Activated T-helper 1 cell treated with anti-CD3 and anti-CD28 coated beads, Interleukin-12 subunit alpha, Interleukin-12 subunit beta, Interleukin-2, Interleukin-4 antibody, amounts not matched to agents 30 ng/mL and 10 ng/mL and 1 ng/mL, durations not matched to agents 14 hours and 24 hours and 36 hours (primary cell): ENCODE measurements at regions of chr7 and their contacts with region 1.

Region 1: GRCh38 chr7:24336461-24336860 is 52.5 kb downstream of the NPY start:
- DNase-seq: no peak
- H3K4me3 Mint-ChIP-seq: no peak overlapping the region
- H3K27ac Mint-ChIP-seq: no peak overlapping the region
- H3K4me1 Mint-ChIP-seq: no peaks in the 10 kb centered on the region
- H3K27me3 Mint-ChIP-seq: peaks cover 3% of the 10 kb centered on the region

Region 2: DNA sequence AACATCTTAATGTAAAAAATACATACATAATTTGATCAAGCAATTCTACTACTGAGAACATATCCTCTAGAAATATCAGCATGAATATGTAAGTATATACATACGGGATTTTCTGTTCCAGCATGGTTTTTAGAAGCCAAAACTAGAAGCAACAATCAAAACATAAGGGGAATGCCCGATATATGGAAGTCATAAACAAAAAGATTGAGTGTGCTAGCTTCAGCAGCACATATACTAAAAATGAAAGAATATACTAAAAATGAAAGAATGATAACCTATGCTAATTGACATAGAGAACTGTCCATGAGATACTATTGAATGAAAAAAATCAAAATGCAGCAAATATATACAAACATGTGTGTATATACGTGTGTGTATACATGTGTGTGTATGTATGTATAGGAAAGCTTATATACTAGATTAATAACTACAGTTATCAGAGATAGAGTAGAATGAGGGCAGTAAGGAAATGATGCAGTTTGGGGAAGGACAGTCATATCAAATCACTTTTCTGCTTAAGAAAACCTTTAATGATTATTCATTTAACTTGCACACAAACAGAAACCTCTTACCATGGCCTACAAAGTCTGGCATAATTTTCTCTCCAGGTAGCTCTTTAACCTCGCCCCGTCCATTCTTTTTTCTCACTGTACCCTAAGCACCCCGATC is 20.4 kb after region 1 on chr7:
- intact Hi-C with region 1: loop called (anchors 2 kb)
- DNase-seq: no peak
- H3K4me3 Mint-ChIP-seq: no peak overlapping the region
- H3K27ac Mint-ChIP-seq: no peak overlapping the region
- H3K4me1 Mint-ChIP-seq: no peaks in the 10 kb centered on the region
- H3K27me3 Mint-ChIP-seq: peaks cover 9% of the 10 kb centered on the region